Left cardiac atrium (tissue), 4 donors: ENCODE measurements at regions of chr10 and their contacts with region 1.

Region 1: DNA sequence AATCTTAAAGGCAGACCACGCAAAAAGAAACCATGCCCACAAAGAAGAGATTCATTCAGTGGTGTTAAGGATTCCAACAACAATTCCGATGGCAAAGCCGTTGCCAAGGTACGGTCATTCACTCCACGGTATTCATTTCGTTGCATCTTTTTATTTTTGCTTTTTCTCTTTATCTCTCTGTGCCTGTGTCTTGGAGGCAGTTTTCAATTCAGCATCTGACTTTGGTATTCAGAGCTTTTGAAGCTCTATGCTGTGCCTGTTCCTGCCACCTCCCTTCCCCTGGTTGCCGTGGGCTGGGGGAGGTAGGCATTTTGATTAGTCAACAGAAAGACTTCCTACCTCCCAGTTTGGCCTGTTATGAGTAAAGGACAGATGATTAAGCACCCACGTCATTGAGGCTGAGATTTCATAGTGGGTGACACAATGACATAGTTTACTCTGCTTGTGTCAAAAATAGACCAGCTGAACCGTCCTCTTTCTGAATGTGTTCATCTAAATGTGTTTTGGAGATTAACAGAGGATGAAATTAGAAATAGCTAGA is 149.5 kb downstream of the ARID5B start:
- DNase-seq: peak; percentile 75
- ATAC-seq: peak; percentile 52 to 56

Region 2: DNA sequence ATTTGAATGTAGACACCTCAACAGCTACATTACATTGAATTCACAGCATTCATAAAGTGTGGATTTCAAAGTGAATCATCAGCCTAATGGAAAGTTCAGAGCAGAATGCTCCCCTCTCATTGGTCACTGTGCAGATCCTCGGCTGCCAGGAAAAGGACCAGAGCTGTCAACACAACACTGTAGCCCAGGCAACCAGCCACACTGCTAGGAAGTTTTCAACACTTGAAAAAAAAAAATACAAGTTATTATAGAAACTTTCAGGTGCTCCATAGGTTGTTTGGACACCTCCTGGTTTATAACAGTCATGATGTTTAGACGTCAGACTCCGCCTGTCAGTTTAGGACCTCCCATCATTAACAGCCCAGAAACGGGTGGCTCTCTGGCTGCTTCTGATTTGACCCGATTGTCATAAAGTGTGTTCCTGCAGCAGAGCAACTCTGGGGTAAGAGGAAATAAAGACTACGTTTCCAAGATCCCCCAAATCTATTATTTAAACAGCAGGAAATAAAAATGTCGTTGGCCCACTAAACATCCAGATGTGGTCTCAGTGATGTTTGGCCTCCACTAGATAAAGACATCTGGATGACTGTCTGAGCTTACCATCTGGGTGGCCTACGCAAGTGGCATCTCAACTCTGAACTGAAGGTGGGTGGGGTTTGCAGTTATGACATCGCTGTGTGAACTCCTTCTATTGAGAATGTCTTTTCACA is 270.9 kb before region 1 on chr10:
- intact Hi-C with region 1: no loop called
- DNase-seq: peak; percentile 65
- ATAC-seq: peak; percentile 78 to 98

Region 3: DNA sequence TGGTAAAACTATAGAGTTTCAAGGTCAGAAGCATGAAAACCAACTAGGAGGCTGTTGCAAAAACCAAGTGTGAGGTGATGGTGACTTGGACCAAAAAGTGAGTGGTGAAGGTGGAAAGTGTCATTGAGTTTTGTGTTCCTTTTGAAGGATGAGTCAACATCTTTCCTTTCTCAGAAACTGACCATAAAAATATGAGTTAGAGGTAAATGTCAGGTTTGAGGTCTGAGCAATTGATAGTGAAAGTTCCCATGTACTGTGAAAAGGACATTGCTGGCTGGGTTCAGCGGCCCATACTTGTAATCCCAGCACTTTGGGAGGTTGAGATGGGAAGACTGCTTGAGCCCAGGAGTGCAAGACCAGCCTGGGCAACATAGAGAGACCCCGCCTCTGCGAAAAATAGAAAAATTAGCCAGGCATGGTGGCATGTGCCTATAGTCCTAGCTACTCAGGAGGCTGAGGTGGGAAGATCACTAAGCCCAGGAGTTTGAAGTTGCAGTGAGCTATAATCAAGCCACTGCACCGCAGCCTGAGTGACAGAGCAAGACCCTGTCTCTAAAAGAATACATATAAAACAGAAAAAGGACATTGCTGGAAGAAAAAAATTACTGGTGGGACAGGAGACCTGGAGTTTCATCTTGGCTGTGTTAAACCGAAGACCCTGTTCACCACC is 238.8 kb before region 1 on chr10:
- intact Hi-C with region 1: no loop called
- DNase-seq: no peak
- ATAC-seq: no peak

Region 4: DNA sequence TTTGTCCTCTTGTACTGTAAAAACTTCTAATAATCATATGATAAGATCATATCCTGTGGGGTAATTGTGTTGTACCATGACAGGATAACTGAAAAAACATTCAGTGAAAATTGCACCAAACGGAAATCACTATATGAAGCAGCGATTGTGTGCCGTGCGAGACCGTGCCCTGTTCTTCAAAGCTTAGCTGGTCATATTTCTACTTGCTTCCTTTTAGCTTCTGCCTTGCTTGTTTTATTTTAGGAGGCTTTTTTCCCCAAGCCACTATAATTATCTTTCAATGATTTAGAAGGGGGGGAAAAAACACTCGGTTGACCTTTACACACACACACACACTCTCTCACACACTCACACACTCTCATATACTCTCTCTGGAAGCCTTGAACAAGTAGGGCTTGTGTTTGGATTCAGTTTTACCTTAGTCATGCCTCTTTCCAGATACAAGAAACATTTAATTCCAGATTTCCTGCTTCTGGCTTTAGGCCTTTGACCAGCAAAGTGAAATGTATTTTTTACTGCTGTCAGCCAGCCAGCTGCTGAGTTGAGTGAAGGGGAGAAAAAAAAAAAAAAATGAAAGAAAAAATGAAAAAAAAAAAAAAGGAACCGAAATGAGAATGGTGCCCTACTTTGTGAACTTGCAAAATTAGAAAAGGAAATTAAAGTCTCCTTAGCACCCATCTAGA is 31.9 kb after region 1 on chr10:
- intact Hi-C with region 1: loop called in 1 of 2 experiments (anchors 2 kb)
- DNase-seq: no peak
- ATAC-seq: peak; percentile 44 to 52